ENCODE measurements at regions of chr2 and their contacts with region 1.

Region 1: DNA sequence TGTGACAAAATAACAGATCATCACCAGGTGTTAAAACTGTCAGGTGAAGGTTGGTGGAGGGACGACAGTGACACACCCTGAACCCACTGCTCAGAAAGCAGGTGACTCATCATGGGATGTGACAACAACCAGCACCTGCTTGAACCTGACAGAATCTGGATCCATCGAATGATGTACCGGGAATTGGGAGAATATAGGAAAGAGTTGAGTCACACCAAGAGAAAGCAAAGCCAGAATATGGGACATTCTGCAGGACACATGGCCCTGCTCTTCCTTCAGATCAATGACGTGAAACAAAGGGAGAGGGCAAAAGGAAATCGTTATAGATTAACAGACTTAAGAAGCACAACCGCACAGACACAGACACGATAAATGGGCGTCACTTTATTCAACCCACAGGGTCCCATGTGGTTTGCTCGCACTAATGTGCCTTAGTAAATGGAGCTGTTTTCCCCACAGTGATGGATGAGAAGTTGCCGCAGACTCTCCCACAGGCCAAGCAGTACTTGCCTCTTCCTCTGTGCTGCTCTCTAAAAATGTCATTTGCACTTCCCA is 100.1 kb downstream of the CRACDL start:
- DNase-seq: no peak
- ATAC-seq: no peak
- H3K4me3 ChIP-seq: no peak overlapping the region
- H3K27ac ChIP-seq: no peak overlapping the region
- H3K4me1 ChIP-seq: no peaks in the 10 kb centered on the region
- H3K27me3 ChIP-seq: no peaks in the 10 kb centered on the region

Region 2: GRCh38 chr2:98649135-98649991 is 186.5 kb before region 1 on chr2:
- intact Hi-C with region 1: loop called (anchors 1 kb)
- DNase-seq: peak; percentile 74 to 81
- ATAC-seq: peak; percentile 93
- H3K4me3 ChIP-seq: no peak overlapping the region
- H3K27ac ChIP-seq: no peak overlapping the region
- H3K4me1 ChIP-seq: no peaks in the 10 kb centered on the region
- H3K27me3 ChIP-seq: no peaks in the 10 kb centered on the region

Region 3: GRCh38 chr2:99066075-99066958 is 230.4 kb after region 1 on chr2:
- intact Hi-C with region 1: loop called in 1 of 2 experiments (anchors 10 kb)
- DNase-seq: no peak
- ATAC-seq: no peak
- H3K4me3 ChIP-seq: no peak overlapping the region
- H3K27ac ChIP-seq: no peak overlapping the region
- H3K4me1 ChIP-seq: no peaks in the 10 kb centered on the region
- H3K27me3 ChIP-seq: no peaks in the 10 kb centered on the region